Ovary (tissue), 10 donors: ENCODE measurements at regions of chr5 and their contacts with region 1.

Region 1: GRCh38 chr5:9774472-9775079 is 144.4 kb upstream of the TAS2R1 start:
- DNase-seq: no peak
- H3K4me3 ChIP-seq: no peak overlapping the region
- H3K27ac ChIP-seq: no peak overlapping the region
- H3K4me1 ChIP-seq: no peaks in the 10 kb centered on the region
- H3K27me3 ChIP-seq: no peaks in the 10 kb centered on the region
- CTCF ChIP-seq: no peak
- EP300 ChIP-seq: no peak
- POLR2A ChIP-seq: no peak

Region 2: GRCh38 chr5:8417316-8418048 is 1357.1 kb before region 1 on chr5:
- intact Hi-C with region 1: no loop called
- DNase-seq: no peak
- H3K4me3 ChIP-seq: no peak overlapping the region
- H3K27ac ChIP-seq: no peak overlapping the region
- H3K4me1 ChIP-seq: peaks cover 3% of the 10 kb centered on the region
- H3K27me3 ChIP-seq: no peaks in the 10 kb centered on the region
- CTCF ChIP-seq: no peak
- EP300 ChIP-seq: no peak
- POLR2A ChIP-seq: no peak

Region 3: DNA sequence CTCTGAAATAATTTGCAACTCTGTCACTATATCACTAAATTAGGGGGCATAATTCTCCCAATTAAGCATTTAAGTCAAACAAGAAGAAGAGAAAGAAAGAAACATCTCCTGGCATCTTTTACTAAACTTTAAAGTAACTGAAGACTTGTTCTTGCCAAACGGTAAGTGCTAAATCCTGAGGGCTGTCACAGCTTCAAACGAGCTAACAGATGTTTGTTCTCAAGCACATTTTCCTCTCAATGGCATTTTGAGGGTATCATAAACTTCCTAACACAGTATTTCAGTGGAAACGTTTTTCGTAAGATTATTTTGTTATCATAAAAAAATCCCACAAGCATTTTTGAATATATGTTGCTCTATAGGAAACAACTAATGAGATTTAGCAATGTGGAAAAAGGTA is 25.0 kb after region 1 on chr5:
- intact Hi-C with region 1: no loop called
- DNase-seq: no peak
- H3K4me3 ChIP-seq: no peak overlapping the region
- H3K27ac ChIP-seq: no peak overlapping the region
- H3K4me1 ChIP-seq: no peaks in the 10 kb centered on the region
- H3K27me3 ChIP-seq: no peaks in the 10 kb centered on the region
- CTCF ChIP-seq: no peak
- EP300 ChIP-seq: no peak
- POLR2A ChIP-seq: no peak

Region 4: GRCh38 chr5:10812218-10812617 is 1037.6 kb after region 1 on chr5:
- intact Hi-C with region 1: loop called in 1 of 4 experiments (anchors 5 kb)
- DNase-seq: no peak
- H3K4me3 ChIP-seq: no peak overlapping the region
- H3K27ac ChIP-seq: no peak overlapping the region
- H3K4me1 ChIP-seq: peaks cover 2% of the 10 kb centered on the region
- H3K27me3 ChIP-seq: no peaks in the 10 kb centered on the region
- CTCF ChIP-seq: no peak
- EP300 ChIP-seq: no peak
- POLR2A ChIP-seq: no peak